ENCODE measurements at regions of chrX and their contacts with region 1.

Region 1: DNA sequence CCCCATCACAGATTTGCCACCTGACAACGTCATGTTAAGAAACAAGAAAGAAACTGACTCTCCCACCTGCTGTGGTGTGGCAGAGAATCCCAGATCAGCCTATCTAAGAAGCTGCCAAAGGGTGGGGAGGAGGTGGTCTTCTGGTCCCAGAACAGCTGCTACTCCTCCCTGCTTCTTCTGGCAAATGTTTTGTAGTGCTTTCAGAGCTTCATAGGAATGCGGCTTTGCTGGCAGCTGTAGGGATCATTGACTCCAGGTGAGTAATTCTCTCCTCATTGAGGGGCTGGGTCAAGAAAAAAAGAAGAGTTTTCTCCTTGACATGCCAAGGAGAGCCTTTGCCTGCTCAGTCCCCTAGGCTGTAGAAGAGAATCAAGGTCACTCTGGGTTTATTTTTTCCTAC is 23.3 kb downstream of the NRK start:
- DNase-seq: no peak
- ATAC-seq: no peak

Region 2: GRCh38 chrX:105608745-105609144 is 236.9 kb before region 1 on chrX:
- intact Hi-C with region 1: no loop called
- DNase-seq: no peak
- ATAC-seq: peak; percentile 74

Region 3: GRCh38 chrX:105910627-105911026 is 65.0 kb after region 1 on chrX:
- intact Hi-C with region 1: loop called (anchors 10 kb)
- DNase-seq: no peak
- ATAC-seq: no peak